Gastrocnemius medialis (tissue), 4 donors: ENCODE measurements at regions of chr19 and their contacts with region 1.

Region 1: GRCh38 chr19:56567274-56568120 is at the start of gene ZNF470:
- DNase-seq: peak; percentile 90 to 92
- ATAC-seq: peak; percentile 99
- H3K4me3 ChIP-seq: peak within 1 kb of the TSS; percentile 80 to 98 (median 85)
- H3K27ac ChIP-seq: peak within 1 kb of the TSS; percentile 83 to 91 (median 86)
- H3K4me1 ChIP-seq: peaks cover 13 to 14% of the 10 kb centered on the region in 2 donors
- H3K27me3 ChIP-seq: no peaks in the 10 kb centered on the region
- CTCF ChIP-seq: peak in 1 of 5 experiments; percentile 5
- POLR2A ChIP-seq: peak; percentile 46 to 50
- total RNA-seq, gene ZNF470: 0.32 to 2.0 (median 0.83) TPM

Region 2: GRCh38 chr19:56403764-56404704 is 163.5 kb before region 1 on chr19 and contains the start of gene ZNF583:
- in situ Hi-C with region 1: no loop called
- intact Hi-C with region 1: loop called (anchors 5 kb)
- DNase-seq: peak; percentile 89 to 97
- ATAC-seq: peak; percentile 96 to 99
- H3K4me3 ChIP-seq: peak within 1 kb of the TSS; percentile 66 to 95 (median 84)
- H3K27ac ChIP-seq: peak within 1 kb of the TSS; percentile 90 to 93 (median 92)
- H3K4me1 ChIP-seq: peaks cover 12 to 14% of the 10 kb centered on the region in 2 donors
- H3K27me3 ChIP-seq: no peaks in the 10 kb centered on the region
- CTCF ChIP-seq: no peak
- POLR2A ChIP-seq: no peak
- total RNA-seq, gene ZNF583: 3.5 to 9.2 (median 4.3) TPM

Region 3: DNA sequence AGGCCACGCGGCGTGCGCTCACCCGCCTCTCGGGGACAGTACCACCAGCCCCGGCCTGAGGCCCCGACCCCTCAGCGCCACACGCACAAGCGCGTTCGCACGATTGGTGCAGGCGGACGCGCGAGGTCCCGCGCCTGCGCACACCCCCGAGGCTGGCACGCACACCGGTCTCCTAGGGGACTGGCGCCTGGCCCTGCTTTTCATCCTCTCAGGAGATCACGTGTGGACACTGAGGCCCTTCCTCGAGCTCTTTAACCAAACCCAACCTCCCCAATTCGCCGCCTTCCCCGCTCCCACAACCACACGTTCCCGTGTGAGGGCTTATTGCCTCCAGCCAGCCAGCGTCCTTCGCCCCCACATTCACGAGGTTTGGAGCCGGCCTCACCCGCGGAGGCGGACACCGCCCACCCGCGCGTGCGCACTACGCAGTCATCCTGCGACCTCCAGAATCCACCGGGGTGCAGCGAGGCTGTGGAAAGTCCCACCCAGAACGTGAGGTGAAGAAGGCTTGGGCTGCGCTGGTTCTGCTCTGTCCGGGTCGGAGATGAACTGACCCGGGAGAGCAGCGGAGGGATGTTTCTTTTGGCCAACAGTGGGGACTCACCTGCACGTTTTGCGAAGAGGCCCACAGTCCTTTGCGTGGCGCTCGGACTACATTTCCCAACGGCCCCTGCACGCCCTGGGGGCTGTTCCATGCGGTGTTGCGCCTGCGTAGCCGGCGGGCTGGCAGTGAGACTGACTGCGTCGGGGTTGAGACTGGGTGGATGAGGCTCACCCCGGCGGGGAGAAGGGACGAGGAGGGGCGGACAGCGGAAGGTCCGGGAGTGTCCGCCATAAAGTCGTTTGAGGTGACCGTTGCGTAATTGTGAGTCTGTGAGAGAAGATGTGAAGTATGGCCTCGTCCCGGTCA is 89.8 kb before region 1 on chr19:
- in situ Hi-C with region 1: no loop called
- intact Hi-C with region 1: loop called (anchors 1 kb)
- DNase-seq: peak; percentile 71 to 73
- ATAC-seq: peak; percentile 87 to 95
- H3K4me3 ChIP-seq: peak overlapping the region; percentile 46 to 83 (median 69)
- H3K27ac ChIP-seq: peak overlapping the region; percentile 54 to 86 (median 83)
- H3K4me1 ChIP-seq: peaks cover 0 to 5% of the 10 kb centered on the region in 2 donors
- H3K27me3 ChIP-seq: no peaks in the 10 kb centered on the region
- CTCF ChIP-seq: no peak
- POLR2A ChIP-seq: peak; percentile 31 to 42

Region 4: DNA sequence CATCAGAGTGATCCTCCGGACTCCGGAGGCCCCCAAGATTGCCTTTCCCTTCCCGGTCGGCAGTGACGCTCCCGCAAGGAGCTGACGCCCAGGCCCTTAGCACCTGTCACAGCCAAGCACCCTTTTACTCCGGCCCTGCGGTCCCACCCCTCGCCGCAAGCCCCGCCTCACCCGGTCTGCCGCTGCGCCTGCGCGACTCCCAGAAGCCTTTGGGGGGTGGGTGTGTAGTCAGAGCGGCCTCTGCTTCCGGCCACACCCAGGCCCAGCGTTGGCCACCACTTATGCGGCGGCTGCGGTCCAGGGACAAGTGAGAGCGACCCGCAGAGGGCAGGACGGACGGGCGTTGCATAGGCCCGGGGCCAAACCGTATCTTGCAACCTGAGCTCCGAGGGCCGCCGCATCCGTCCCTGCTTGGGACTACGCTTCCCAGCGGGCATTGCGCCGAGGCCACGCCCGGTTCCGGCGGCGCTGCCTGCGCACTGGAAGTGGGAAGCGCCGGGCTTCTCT is 29.2 kb before region 1 on chr19:
- in situ Hi-C with region 1: no loop called
- intact Hi-C with region 1: loop called (anchors 1 kb)
- DNase-seq: peak; percentile 79 to 87
- ATAC-seq: peak; percentile 98 to 99
- H3K4me3 ChIP-seq: peak overlapping the region; percentile 82 to 99 (median 89)
- H3K27ac ChIP-seq: peak overlapping the region; percentile 87 to 97 (median 94)
- H3K4me1 ChIP-seq: peaks cover 7 to 13% of the 10 kb centered on the region in 2 donors
- H3K27me3 ChIP-seq: no peaks in the 10 kb centered on the region
- CTCF ChIP-seq: peak in 1 of 5 experiments; percentile 25
- POLR2A ChIP-seq: peak in 1 of 2 donors; percentile 34

Region 5: GRCh38 chr19:56594783-56595547 is 27.5 kb after region 1 on chr19 and contains the start of gene ZNF71:
- in situ Hi-C with region 1: no loop called
- intact Hi-C with region 1: loop called (anchors 1 kb)
- DNase-seq: peak; percentile 71 to 75
- ATAC-seq: peak; percentile 77 to 90
- H3K4me3 ChIP-seq: peak within 1 kb of the TSS; percentile 73 to 98 (median 84)
- H3K27ac ChIP-seq: peak within 1 kb of the TSS; percentile 76 to 82 (median 78)
- H3K4me1 ChIP-seq: peaks cover 12 to 18% of the 10 kb centered on the region in 2 donors
- H3K27me3 ChIP-seq: no peaks in the 10 kb centered on the region
- CTCF ChIP-seq: no peak
- POLR2A ChIP-seq: peak in 1 of 2 donors; percentile 28
- total RNA-seq, gene ZNF71: 6.7 to 7.5 (median 7.4) TPM

Region 6: GRCh38 chr19:58182989-58183816 is 1615.7 kb after region 1 on chr19 and contains the start of gene ZNF274:
- in situ Hi-C with region 1: no loop called
- intact Hi-C with region 1: loop called (anchors 5 kb)
- DNase-seq: peak; percentile 84 to 92
- ATAC-seq: peak; percentile 92 to 95
- H3K4me3 ChIP-seq: peak within 1 kb of the TSS; percentile 82 to 94 (median 92)
- H3K27ac ChIP-seq: peak within 1 kb of the TSS; percentile 92 to 99 (median 98)
- H3K4me1 ChIP-seq: peaks cover 0 to 5% of the 10 kb centered on the region in 2 donors
- H3K27me3 ChIP-seq: no peaks in the 10 kb centered on the region
- CTCF ChIP-seq: no peak
- POLR2A ChIP-seq: peak; percentile 88 to 94
- total RNA-seq, gene ZNF274: 9.0 to 20.7 (median 13.4) TPM